Posterior cingulate gyrus (tissue), 11 donors: ENCODE measurements at regions of chr15 and their contacts with region 1.

Region 1: DNA sequence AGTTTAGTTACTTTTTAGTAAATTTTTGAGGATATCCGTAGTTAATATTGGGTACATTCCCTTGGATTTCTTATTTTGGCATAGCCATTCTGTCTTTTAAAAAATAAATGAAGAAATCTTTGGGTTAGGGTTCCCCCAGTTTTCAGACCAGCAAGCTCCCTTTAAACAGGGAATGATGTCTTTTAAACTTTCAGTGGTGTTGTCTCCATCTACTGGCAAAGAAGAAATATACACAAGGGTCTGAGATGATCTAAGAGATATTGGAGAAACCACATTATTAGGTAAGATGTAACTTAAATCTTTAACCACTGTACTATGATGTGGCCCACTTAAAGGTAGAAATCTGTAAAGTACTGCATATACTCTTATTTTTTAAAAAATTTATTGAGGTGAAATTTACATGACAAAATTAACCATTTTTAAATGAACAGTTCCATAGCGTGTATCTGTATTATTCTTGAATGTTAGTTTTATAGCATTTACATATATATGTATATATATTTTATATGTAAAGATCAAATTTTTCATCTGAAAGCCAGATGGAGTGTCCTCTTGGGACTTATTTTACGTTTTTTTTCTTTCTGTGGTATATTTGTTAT is 35.1 kb upstream of the EIF3J start:
- DNase-seq: no peak

Region 2: GRCh38 chr15:44219073-44219472 is 282.8 kb before region 1 on chr15:
- intact Hi-C with region 1: loop called (anchors 1 kb)
- DNase-seq: no peak

Region 3: DNA sequence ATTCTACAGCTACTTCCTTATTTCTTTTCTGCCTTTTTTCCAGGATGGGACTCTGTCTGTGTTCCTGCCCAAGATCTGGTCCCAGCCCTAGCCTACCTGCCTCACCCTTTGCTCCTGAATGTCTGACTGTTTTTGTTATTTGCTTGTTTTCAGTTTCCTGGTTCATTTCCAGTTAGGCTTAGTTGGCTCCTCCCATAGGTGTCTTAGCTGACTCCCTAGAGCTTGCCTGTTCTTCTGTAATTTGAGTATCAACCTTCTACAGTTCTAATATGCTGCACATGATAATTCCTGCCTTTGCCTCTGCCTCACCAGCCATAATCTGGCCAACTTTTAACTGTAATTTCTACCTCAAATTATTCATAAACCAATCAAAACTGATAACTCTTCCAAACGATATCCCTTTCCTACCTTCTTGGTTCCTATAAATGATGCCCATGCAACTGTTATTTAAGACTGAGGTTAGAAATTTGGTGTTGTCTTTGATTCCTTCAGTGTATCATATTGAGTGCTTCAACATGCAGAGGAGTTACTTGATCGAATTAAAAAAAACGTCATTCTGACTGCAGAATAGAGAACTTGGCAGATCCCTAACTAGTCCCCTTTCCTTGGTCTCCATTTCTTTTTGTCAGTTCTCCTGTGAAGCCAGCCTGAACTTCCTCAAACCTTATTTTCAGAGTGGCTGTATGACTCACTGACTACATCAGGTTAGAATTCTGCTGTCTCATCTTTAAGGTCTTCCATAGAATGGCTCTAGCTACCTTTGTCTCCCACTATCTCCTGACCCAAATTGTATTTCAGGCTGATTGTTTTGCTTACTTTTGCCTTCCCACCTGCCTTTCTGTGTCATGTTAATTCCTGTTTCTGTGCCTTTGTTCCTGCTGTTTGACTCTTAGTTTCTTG is 205.0 kb before region 1 on chr15:
- intact Hi-C with region 1: loop called (anchors 10 kb)
- DNase-seq: no peak

Region 4: DNA sequence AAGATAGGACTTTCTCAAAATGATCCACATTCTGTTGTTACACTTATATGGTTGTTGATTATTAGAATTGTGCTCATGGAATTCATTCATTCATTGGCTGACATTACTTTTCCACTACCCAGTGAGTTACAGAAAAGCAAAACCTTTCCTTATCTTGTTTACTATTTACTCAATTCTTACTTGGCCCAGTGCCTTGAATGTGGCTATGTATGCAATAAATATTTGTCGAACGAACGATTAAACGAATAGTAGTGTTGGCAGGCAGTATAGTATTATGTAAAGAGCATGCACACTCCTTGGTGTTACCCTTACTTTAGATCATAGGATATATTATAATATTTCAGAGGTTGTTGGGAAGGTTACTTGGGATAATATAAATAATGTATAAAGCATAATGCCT is 43.4 kb before region 1 on chr15:
- intact Hi-C with region 1: no loop called
- DNase-seq: no peak